Prostate gland (tissue), 2 donors: ENCODE measurements at regions of chr1 and their contacts with region 1.

Region 1: DNA sequence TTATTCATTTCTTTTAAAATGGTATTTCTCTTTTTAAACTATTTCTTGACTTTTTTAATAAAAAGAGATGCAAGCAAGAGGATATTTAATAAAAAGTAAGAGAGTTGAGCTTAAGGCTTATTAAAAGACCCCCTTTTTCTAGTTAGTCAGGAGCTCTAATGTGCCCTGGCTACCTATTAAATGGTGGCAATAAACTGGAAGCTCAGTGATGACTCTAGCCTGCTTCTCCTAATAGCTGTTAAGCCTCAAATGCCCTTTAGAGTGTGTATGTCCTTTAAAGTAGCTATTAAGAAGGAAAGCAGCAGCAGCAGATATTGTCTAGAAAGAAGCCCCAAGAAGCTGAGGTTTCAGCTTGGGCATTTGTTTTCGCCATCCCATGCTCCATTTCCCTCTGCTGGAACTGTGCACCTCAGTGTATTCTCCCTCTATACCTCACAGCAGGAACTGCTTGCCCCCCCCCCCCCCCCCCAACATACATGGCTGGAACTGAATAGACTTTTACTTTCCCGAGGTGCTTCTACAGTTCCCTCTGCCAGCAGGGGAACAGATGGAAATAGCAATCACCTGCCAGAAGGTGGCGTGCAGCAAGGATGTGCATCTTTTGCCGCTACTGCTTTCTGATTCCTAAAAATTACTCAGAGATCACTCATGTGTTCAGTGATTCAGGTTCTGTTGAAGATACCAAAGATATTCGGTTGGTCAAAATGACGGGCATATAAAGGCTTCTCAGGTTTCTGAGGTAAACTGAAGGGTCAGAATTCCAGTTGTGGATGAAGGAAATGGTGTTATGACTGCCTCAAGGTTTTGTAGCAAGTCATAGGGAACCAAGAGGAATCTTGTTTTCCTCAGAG is 2.5 kb downstream of the RGS4 start:
- DNase-seq: peak; percentile 43
- H3K4me3 ChIP-seq: no peak overlapping the region
- H3K27ac ChIP-seq: no peak overlapping the region
- H3K4me1 ChIP-seq: no peaks in the 10 kb centered on the region
- H3K27me3 ChIP-seq: no peaks in the 10 kb centered on the region
- CTCF ChIP-seq: peak in 3 of 4 experiments; percentile 40 to 63 (median 54)
- POLR2A ChIP-seq: no peak

Region 2: DNA sequence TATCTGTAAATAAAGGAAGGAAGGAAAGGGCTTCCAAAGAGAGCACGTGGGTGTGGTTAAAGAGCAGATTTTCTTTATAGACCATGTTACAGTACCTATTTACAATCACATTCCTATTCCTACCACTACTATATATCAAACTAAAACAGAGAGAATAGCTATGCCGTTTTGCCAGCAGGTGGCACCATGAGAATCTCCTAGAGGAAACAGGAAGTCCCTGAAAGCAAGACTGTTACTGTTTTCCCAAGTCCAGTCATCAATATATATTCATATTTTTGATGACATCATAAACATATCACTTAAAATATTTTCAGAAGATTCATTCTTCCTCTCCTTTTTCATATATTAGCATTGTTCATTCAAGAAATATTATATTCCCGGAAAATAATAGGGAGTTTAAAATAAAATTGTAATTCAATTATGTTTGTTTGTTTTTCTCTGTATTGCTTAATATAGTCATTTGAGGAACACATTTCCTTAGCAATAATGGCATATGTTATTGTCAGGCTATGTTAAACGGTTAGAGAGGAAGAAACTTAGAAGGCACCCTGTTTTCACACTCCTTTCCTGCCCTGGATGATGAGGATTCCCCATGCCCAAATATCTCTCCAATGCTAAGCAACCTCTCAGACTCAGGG is 217.3 kb before region 1 on chr1:
- intact Hi-C with region 1: loop called (anchors 10 kb)
- DNase-seq: peak; percentile 54
- H3K4me3 ChIP-seq: no peak overlapping the region
- H3K27ac ChIP-seq: no peak overlapping the region
- H3K4me1 ChIP-seq: no peaks in the 10 kb centered on the region
- H3K27me3 ChIP-seq: no peaks in the 10 kb centered on the region
- CTCF ChIP-seq: peak; percentile 50 to 76 (median 72)
- POLR2A ChIP-seq: no peak

Region 3: GRCh38 chr1:163174524-163175437 is 103.2 kb after region 1 on chr1:
- intact Hi-C with region 1: loop called (anchors 5 kb)
- DNase-seq: peak; percentile 43
- H3K4me3 ChIP-seq: no peak overlapping the region
- H3K27ac ChIP-seq: no peak overlapping the region
- H3K4me1 ChIP-seq: no peaks in the 10 kb centered on the region
- H3K27me3 ChIP-seq: no peaks in the 10 kb centered on the region
- CTCF ChIP-seq: peak; percentile 55 to 80 (median 70)
- POLR2A ChIP-seq: no peak

Region 4: GRCh38 chr1:163315773-163316374 is 244.2 kb after region 1 on chr1:
- intact Hi-C with region 1: loop called (anchors 5 kb)
- DNase-seq: no peak
- H3K4me3 ChIP-seq: no peak overlapping the region
- H3K27ac ChIP-seq: no peak overlapping the region
- H3K4me1 ChIP-seq: no peaks in the 10 kb centered on the region
- H3K27me3 ChIP-seq: no peaks in the 10 kb centered on the region
- CTCF ChIP-seq: peak in 3 of 4 experiments; percentile 68 to 74 (median 73)
- POLR2A ChIP-seq: no peak

Region 5: GRCh38 chr1:163523373-163524029 is 451.9 kb after region 1 on chr1:
- intact Hi-C with region 1: no loop called
- DNase-seq: no peak
- H3K4me3 ChIP-seq: no peak overlapping the region
- H3K27ac ChIP-seq: no peak overlapping the region
- H3K4me1 ChIP-seq: no peaks in the 10 kb centered on the region
- H3K27me3 ChIP-seq: no peaks in the 10 kb centered on the region
- CTCF ChIP-seq: no peak
- POLR2A ChIP-seq: no peak